Tibial artery (tissue), 4 donors: ENCODE measurements at regions of chr1 and their contacts with region 1.

Region 1: DNA sequence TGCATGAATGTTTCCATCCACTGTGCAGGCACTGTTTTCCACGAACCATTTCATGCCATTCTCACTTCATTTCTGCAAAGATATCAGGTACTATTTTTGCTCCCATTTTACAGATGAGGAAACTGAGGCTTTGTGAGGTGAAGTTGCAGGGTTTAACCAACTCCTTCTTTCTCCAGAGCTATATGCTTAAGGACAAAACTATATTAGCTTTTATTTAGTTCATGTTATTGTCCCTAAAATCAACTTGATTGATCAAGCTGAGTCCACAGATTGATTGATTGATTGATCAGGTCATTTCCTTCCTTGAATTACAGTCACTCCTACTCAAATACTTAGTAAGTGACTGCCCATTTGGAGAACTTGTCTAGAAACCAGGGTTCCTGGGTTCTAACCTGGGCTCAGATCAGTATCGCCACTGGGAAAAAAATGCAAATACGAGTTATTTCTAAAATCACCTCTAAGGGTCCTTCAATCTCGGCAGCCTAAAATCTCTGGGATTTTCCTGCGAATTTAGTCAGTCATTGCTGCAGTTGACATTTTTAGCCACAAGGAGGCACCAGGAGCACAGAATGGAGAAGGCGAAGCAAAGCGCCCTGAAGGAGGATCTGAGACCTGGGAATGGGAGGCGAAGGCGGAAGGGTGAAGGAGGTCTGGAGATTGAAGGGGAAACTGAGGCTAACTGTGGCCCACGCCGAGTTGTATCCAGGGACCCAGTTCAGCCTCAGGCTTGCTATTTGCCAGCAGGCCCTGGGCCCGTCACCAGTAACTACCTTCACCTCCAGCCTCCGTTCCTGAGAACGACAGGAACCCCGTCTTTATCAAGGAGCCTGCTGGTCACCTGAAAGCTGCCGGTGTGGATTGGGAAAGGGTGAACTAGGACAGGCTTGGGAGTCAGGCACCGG is 14.3 kb upstream of the MUL1 start:
- DNase-seq: peak; percentile 74 to 89
- H3K4me3 ChIP-seq: no peak overlapping the region
- H3K27ac ChIP-seq: no peak overlapping the region
- H3K4me1 ChIP-seq: peaks cover 0 to 4% (median 0%) of the 10 kb centered on the region in 4 donors
- H3K27me3 ChIP-seq: peaks cover 0 to 17% of the 10 kb centered on the region in 2 donors
- CTCF ChIP-seq: peak; percentile 85 to 90

Region 2: DNA sequence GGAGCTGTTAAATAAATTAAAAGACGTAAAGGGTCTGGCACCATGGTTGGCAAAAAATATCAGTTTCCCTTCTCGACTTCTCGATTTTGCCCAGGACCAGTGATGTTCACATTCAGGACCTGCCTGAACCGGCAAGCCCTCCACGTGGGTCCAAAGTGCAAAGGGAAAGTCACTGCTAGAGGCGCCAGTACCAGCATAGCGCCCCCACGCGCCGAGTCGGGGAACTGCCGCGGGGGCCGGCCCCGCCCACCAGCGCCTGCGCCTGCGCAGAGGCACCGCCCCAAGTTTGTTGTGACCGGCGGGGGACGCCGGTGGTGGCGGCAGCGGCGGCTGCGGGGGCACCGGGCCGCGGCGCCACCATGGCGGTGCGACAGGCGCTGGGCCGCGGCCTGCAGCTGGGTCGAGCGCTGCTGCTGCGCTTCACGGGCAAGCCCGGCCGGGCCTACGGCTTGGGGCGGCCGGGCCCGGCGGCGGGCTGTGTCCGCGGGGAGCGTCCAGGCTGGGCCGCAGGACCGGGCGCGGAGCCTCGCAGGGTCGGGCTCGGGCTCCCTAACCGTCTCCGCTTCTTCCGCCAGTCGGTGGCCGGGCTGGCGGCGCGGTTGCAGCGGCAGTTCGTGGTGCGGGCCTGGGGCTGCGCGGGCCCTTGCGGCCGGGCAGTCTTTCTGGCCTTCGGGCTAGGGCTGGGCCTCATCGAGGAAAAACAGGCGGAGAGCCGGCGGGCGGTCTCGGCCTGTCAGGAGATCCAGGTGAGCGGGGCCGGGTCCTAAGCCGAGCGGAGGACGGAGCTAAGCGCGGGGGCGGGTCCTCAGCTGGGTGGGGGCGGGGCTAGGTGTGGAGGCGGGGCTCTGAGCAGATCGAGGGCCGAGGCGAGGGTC is 111.2 kb after region 1 on chr1 and contains the start of gene PINK1:
- intact Hi-C with region 1: loop called (anchors 2 kb)
- DNase-seq: peak; percentile 70 to 90
- H3K4me3 ChIP-seq: peak within 1 kb of the TSS; percentile 86 to 100
- H3K27ac ChIP-seq: peak within 1 kb of the TSS; percentile 96
- H3K4me1 ChIP-seq: peaks cover 0 to 25% (median 15%) of the 10 kb centered on the region in 4 donors
- H3K27me3 ChIP-seq: peaks cover 0 to 7% of the 10 kb centered on the region in 2 donors
- CTCF ChIP-seq: peak; percentile 98